Psoas muscle (tissue), 8 donors: ENCODE measurements at regions of chr1 and their contacts with region 1.

Region 1: DNA sequence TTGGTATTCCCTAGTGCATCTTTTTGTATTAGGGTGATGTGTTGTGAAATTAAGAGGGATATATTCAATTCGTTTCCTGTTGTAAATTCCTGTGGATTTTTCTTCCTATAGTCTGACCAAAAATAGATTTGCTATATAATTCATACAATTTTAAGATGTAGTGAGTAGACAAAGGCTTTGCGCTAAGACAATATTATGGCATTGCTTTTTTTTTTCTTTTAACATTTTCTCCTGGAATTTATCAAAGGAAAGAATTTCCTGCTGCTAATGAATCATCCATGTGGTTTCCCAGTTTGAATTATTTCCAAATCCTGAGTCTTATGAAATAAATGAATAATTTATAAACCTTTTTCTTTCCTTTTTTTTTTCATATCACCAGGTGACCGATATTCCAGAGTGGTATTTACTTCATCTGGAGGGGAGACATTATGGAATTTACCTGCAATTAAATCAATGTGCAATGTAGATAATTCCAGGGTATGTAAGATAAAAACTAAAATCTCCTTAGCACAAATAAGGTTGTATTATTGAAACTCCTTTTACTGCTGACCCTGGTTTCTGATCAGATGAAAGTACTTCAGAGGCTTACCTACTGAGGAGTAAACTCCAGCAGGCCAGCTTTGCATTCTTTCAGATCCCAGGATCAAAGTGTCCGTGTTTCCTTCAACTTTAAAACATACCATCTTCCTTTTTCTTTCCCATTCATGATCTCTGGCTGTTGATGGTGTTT is 148.4 kb downstream of the TLR5 start:
- DNase-seq: no peak
- ATAC-seq: no peak
- H3K4me3 ChIP-seq: no peak overlapping the region
- H3K27ac ChIP-seq: no peak overlapping the region
- H3K4me1 ChIP-seq: no peaks in the 10 kb centered on the region
- H3K27me3 ChIP-seq: no peaks in the 10 kb centered on the region
- CTCF ChIP-seq: no peak

Region 2: GRCh38 chr1:222948079-222948478 is 46.6 kb before region 1 on chr1:
- intact Hi-C with region 1: loop called in 1 of 2 experiments (anchors 10 kb)
- DNase-seq: no peak
- ATAC-seq: no peak
- H3K4me3 ChIP-seq: no peak overlapping the region
- H3K27ac ChIP-seq: no peak overlapping the region
- H3K4me1 ChIP-seq: no peaks in the 10 kb centered on the region
- H3K27me3 ChIP-seq: no peaks in the 10 kb centered on the region
- CTCF ChIP-seq: no peak